Endothelial cell of umbilical vein (primary cell): ENCODE measurements at regions of chr4 and their contacts with region 1.

Region 1: DNA sequence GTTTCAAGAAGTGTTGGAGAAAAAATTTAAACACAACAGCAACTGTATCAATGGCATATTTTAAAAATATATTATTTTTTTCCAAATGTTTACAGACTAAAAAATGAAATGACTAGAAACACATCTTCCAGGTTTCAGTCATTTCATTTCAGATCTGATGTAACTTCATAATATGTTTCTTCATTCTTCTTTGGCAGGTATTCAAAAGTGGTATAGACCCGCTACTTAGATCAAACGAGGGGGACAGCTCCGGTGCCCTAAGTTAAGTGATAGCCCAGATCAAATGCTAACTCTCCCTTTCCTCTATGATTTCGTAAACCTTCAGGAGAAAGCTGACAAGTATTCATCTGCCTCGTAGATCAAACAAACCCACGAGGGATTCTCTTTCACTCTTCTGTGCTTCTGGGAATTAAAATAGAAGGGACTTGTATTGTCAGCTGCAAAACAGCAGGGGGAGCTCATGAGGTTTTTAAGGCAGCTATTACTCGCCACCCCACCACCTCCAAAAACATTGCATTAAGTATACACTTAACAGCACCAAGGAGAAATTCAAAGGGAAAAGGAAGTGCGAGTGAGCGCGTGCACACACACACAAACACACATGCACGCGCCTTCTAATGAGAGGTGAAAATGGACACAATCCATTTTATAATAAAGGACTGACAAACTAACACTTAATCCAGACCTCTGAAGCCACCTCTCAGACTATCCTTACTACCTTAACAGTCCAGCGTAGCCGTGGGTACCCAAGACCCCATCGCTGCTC is 21.4 kb downstream of the HELT start:
- DNase-seq: peak; percentile 68
- H3K4me3 ChIP-seq: no peak overlapping the region
- H3K27ac ChIP-seq: no peak overlapping the region
- H3K4me1 ChIP-seq: no peaks in the 10 kb centered on the region
- H3K27me3 ChIP-seq: peaks cover 0 to 3% of the 10 kb centered on the region in 2 experiments
- CTCF ChIP-seq: peak; percentile 73 to 76
- POLR2A ChIP-seq: no peak

Region 2: DNA sequence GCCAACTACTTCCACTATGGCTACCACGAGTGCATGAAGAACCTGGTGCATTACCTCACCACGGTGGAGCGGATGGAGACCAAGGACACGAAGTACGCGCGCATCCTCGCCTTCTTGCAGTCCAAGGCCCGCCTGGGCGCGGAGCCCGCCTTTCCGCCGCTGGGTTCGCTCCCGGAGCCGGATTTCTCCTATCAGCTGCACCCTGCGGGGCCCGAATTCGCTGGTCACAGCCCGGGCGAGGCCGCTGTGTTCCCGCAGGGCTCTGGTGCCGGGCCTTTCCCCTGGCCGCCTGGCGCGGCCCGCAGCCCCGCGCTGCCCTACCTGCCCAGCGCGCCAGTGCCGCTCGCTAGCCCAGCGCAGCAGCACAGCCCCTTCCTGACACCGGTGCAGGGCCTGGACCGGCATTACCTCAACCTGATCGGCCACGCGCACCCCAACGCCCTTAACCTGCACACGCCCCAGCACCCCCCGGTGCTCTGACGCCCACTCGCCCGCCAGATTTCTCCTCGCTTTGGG is 19.3 kb before region 1 on chr4:
- CTCF ChIA-PET with region 1: interaction called, 11 read pairs
- POLR2A ChIA-PET with region 1: no interaction called
- dilution Hi-C with region 1: no loop called
- intact Hi-C with region 1: no loop called
- DNase-seq: no peak
- H3K4me3 ChIP-seq: no peak overlapping the region
- H3K27ac ChIP-seq: no peak overlapping the region
- H3K4me1 ChIP-seq: no peaks in the 10 kb centered on the region
- H3K27me3 ChIP-seq: peaks cover 80 to 93% of the 10 kb centered on the region in 2 experiments
- CTCF ChIP-seq: no peak
- POLR2A ChIP-seq: no peak

Region 3: GRCh38 chr4:185054876-185055275 is 15.2 kb after region 1 on chr4:
- CTCF ChIA-PET with region 1: interaction called, 10 read pairs
- POLR2A ChIA-PET with region 1: no interaction called
- dilution Hi-C with region 1: no loop called
- intact Hi-C with region 1: no loop called
- DNase-seq: no peak
- H3K4me3 ChIP-seq: no peak overlapping the region
- H3K27ac ChIP-seq: no peak overlapping the region
- H3K4me1 ChIP-seq: no peaks in the 10 kb centered on the region
- H3K27me3 ChIP-seq: peaks cover 0 to 5% of the 10 kb centered on the region in 2 experiments
- CTCF ChIP-seq: no peak
- POLR2A ChIP-seq: no peak

Region 4: DNA sequence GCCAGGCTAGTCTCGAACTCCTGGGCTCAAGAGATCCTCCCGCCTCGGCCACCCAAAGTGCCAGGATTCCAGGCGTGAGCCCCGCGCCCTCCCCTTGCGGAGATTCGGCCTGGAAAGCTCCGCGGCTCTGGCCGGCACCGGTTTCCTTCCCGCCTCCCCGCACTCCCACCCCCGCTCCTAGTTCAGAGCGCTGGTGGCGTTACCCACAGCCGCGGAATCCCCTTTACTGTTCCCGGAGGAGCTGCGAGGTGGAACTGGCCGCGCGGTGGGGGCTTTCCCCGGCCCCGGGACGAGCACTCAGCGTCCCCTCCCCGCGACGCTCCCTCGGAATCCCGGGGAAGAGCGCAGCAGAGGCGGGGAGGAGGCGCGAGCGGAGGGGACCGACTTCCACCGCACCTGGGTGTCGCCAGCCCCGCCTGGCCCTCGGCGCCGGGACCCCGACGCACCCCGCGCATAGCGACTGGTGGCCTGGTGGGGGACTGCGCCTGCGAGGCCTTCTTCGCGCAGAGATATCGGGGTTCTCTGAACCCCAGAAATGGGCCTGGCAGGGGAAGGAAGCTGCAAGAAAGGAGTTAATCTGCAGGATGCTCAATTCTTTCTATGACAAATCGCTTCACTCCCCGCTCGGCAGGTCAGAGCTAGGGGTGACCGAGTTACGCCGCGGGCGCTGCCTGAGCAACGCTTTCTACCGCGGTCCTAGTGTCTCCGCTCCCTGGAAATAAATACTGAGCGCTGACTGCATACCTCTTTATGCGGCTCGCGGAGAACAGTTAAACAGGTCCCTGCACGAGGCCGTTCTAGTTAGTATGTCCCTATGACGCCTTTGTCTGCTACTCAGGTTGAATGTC is 88.8 kb after region 1 on chr4:
- CTCF ChIA-PET with region 1: interaction called, 295 read pairs
- POLR2A ChIA-PET with region 1: no interaction called
- dilution Hi-C with region 1: no loop called
- intact Hi-C with region 1: no loop called
- DNase-seq: peak; percentile 18
- H3K4me3 ChIP-seq: peak overlapping the region; percentile 35 to 64 (median 52)
- H3K27ac ChIP-seq: no peak overlapping the region
- H3K4me1 ChIP-seq: peaks cover 15% of the 10 kb centered on the region
- H3K27me3 ChIP-seq: peaks cover 7% of the 10 kb centered on the region in 2 experiments
- CTCF ChIP-seq: peak in 1 of 2 donors; percentile 17
- POLR2A ChIP-seq: no peak